AG04450 (cell line): ENCODE measurements at regions of chr7 and their contacts with region 1.

Region 1: DNA sequence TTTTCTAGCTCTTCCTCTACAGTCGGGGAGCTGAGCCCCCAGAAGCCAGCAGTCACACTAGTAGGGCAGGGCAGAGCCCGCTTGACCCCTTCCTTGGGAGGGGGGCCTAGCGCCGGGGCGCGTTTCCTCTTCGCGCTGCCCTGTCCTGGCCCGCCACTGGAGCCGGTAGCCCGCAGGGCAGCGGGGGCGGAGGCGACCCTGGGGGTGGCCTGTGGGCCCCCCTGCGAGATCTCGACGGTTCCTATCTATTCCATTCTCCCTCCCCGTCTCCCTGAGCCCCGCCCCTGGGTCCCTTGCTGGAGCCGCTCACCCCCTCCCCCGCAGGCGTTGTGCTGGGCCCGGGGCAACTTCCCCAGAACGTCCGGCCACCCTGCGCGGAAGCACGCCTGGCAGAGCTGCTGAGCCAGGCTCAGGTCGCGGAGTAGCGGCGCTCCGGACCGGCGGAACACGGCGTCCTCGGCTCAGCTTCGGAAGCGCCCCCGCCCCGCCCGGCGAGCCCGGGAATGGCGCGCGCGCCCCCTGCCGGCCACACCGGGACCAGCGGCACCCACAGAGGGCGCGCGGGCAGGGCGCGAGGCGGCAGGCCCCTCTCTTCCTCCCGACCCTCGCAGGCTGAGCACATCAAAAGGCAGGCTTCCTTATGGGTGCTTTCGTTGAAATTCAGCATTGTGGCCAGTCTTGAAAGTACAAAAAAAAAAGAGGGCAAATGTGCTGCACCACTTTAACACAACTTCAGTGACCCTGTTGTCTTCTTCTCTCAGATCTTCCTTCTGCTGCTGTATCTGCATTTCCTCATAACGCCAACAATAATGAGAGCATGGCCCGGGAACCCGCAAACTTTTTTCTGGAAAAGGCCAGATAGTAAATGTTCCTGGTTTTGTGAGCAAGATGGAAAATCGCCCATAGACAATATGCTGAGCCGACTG is 327.6 kb downstream of the TNS3 start:
- DNase-seq: no peak
- H3K4me3 ChIP-seq: peak overlapping the region; percentile 70
- H3K27ac ChIP-seq: peak overlapping the region; percentile 61
- H3K27me3 ChIP-seq: no peaks in the 10 kb centered on the region
- CTCF ChIP-seq: peak; percentile 55

Region 2: DNA sequence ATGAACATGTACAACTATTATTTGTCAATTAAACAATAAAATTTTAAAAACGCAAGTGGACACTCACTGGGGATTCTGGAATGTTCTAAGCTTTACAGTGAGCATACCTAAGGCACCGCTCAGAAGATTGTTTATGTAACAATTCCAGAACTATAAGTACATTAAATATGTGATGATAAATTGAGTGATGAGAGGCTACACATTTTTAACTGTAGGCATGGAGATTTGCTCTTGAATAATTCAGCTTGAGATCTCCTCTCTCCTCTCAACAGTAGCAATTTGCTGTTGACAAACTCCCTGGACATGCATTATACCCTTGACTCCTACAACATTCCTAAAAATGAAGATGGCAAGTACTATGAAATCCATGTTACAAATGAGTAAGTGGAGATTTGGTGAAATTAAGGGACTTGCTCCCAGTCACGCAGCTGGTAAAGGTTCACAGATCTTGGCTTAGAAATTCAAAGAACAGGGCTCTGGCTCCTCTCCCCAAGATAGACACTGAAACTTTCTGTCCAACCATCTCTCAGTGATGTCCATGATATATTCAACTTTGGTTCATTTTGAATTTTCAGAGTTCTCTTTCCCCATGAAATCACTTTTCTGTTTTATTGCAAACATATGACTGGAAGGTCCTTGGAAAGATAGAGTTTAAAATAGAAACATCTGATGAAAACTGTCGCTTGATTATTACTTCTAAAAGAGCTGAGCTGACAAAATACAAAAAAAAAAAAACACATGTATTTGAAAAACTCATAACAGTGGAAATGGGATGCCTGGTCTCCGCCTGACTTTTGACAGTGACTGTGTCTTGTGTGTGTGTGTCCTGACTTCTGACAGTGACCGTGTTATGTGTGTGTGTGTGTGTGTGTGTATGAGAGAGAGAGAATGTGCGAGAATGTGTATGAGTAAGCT is 160.8 kb before region 1 on chr7:
- CTCF ChIA-PET with region 1: interaction called, 10 read pairs
- POLR2A ChIA-PET with region 1: interaction called, 4 read pairs
- DNase-seq: no peak
- H3K4me3 ChIP-seq: no peak overlapping the region
- H3K27ac ChIP-seq: no peak overlapping the region
- H3K27me3 ChIP-seq: no peaks in the 10 kb centered on the region
- CTCF ChIP-seq: no peak

Region 3: GRCh38 chr7:47314728-47315607 is 60.6 kb after region 1 on chr7:
- CTCF ChIA-PET with region 1: no interaction called
- POLR2A ChIA-PET with region 1: no interaction called
- DNase-seq: peak; percentile 51
- H3K4me3 ChIP-seq: no peak overlapping the region
- H3K27ac ChIP-seq: peak overlapping the region; percentile 80
- H3K27me3 ChIP-seq: no peaks in the 10 kb centered on the region
- CTCF ChIP-seq: no peak

Region 4: DNA sequence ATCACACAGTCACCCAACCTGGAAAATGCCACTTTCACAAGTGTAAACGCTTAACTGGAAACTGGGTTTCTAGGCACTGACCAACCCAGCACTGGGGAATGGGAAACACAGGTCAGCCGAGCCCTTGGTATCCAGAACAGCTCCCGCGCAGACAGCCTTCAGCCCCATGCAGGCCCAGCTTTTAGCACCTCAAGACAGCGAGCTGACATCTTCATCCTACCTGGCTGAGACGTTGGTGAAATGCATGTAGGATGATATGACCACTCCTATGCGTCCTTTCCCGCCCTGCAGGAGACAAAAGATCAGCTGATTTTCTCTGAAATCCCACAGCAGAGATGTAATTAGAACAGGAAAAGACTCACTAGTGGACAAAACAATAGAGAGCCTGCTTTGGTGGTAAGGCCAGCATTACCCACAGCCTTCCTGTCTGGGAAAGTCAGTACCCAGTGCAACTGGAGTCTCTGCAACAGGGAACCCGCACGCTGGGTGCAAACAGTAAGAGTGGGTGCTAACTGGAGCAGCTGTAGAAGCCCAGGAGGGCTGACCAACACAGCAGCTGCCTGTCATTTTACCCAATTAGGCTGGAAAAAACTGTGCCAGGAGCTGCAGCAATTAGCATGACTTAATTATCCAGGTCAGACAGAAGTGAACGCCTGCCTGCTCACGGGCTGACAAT is 173.9 kb after region 1 on chr7:
- CTCF ChIA-PET with region 1: no interaction called
- POLR2A ChIA-PET with region 1: no interaction called
- DNase-seq: no peak
- H3K4me3 ChIP-seq: no peak overlapping the region
- H3K27ac ChIP-seq: no peak overlapping the region
- H3K27me3 ChIP-seq: no peaks in the 10 kb centered on the region
- CTCF ChIP-seq: no peak